ENCODE measurements at regions of chr9 and their contacts with region 1.

Region 1: GRCh38 chr9:76441551-76442322 is 17.2 kb upstream of the GCNT1 start:
- DNase-seq: no peak
- H3K4me3 Mint-ChIP-seq: peak overlapping the region; percentile 89
- H3K27ac Mint-ChIP-seq: peak overlapping the region; percentile 98
- H3K4me1 Mint-ChIP-seq: peaks cover 68% of the 10 kb centered on the region
- H3K27me3 Mint-ChIP-seq: no peaks in the 10 kb centered on the region

Region 2: GRCh38 chr9:75148561-75148960 is 1293.2 kb before region 1 on chr9:
- intact Hi-C with region 1: loop called (anchors 5 kb)
- DNase-seq: peak; percentile 37
- H3K4me3 Mint-ChIP-seq: peak overlapping the region; percentile 62
- H3K27ac Mint-ChIP-seq: peak overlapping the region; percentile 87
- H3K4me1 Mint-ChIP-seq: peaks cover 79% of the 10 kb centered on the region
- H3K27me3 Mint-ChIP-seq: no peaks in the 10 kb centered on the region

Region 3: GRCh38 chr9:76231001-76231400 is 210.7 kb before region 1 on chr9:
- intact Hi-C with region 1: no loop called
- DNase-seq: no peak
- H3K4me3 Mint-ChIP-seq: no peak overlapping the region
- H3K27ac Mint-ChIP-seq: no peak overlapping the region
- H3K4me1 Mint-ChIP-seq: no peaks in the 10 kb centered on the region
- H3K27me3 Mint-ChIP-seq: peaks cover 4% of the 10 kb centered on the region

Region 4: DNA sequence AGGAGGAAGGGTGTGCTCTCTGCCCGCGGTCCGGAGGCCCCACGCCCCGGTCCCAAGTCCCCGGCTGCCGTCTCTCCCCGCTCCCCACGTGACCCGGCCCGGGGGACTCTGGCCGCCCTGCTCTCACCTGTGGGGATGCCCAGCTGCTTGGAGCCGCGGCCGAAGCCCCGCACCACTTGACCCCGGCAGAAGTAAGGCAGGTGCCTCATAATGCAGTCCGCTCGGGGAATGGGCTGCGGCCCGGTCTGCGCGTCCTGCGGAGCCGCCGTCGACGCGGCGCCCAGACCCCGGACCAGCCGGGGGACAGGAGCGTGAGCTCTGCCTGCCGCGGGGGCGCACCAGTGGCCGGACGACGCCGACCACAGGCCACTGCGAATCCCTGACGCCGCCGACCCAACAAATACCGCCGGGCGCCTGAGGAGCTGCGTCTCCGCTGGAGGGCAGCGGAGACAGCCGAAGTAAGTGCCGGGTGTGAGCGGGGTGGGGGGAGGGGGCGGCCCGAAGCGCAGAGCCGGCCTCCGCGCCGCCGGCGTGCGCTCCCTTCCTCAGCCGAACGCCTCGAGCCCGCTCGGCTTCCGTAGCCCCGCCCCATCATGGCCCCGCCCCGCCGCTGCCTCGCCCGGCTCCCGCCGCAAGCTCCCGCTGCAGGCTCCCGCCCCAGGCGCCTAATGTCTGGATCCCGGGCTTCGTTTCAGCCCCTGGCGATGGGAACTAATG is 47.6 kb before region 1 on chr9 and contains the start of gene RFK:
- intact Hi-C with region 1: loop called (anchors 1 kb)
- DNase-seq: peak; percentile 89
- H3K4me3 Mint-ChIP-seq: peak within 1 kb of the TSS; percentile 97
- H3K27ac Mint-ChIP-seq: peak within 1 kb of the TSS; percentile 99
- H3K4me1 Mint-ChIP-seq: peaks cover 34% of the 10 kb centered on the region
- H3K27me3 Mint-ChIP-seq: no peaks in the 10 kb centered on the region
- total RNA-seq, gene RFK: 20.3 and 20.8 TPM in 2 replicates

Region 5: DNA sequence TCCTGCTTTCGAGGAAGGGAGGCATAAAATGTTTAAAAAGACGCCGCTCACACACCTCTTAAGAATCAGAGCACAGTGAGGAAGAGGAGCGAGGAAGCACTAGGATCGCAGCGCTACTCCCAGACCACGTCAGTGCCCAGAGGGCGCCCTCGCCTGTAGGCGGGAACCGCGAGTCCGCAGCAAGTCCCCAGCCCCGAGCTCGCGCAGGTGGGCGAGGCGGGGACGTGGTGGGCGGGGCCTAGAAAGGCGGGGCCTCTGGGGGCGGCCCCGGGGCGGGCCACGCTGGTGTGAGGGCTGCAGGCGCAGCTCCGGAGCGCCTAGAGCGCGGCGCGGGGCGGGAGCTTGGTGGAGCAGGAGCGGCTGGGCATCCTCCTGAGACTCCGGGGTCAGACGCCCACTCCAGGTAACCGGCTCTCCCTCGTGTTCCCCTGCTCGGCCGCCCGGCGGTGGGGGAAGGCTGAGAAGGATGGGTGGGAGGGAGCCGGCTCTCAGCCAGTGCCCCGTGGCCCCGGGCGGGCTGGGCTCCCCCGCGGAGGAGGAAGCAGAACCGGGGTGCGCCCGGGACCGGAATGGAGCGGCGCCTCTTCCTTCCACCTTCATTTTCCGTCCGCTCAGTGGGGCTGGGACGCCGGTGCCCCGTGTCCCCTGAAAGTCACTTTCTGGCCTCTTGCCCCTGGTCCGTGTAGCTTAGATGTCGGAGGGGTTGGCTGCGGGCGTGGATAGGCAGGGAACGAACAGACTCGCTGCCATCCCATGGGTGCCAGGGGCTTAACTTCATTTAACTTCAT is 17.4 kb after region 1 on chr9 and contains the start of gene GCNT1:
- intact Hi-C with region 1: loop called (anchors 1 kb)
- DNase-seq: peak; percentile 92
- H3K4me3 Mint-ChIP-seq: peak within 1 kb of the TSS; percentile 87
- H3K27ac Mint-ChIP-seq: peak within 1 kb of the TSS; percentile 91
- H3K4me1 Mint-ChIP-seq: peaks cover 35% of the 10 kb centered on the region
- H3K27me3 Mint-ChIP-seq: peaks cover 3% of the 10 kb centered on the region
- total RNA-seq, gene GCNT1: 11.6 and 13.1 TPM in 2 replicates

Region 6: GRCh38 chr9:77011973-77012821 is 570.5 kb after region 1 on chr9:
- intact Hi-C with region 1: loop called (anchors 5 kb)
- DNase-seq: peak; percentile 44
- H3K4me3 Mint-ChIP-seq: no peak overlapping the region
- H3K27ac Mint-ChIP-seq: no peak overlapping the region
- H3K4me1 Mint-ChIP-seq: peaks cover 10% of the 10 kb centered on the region
- H3K27me3 Mint-ChIP-seq: peaks cover 64% of the 10 kb centered on the region

Measured in activated T-helper 1 cell treated with anti-CD3 and anti-CD28 coated beads, Interleukin-12 subunit alpha, Interleukin-12 subunit beta, Interleukin-2, Interleukin-4 antibody, amounts not matched to agents 30 ng/mL and 10 ng/mL and 1 ng/mL, durations not matched to agents 14 hours and 24 hours and 36 hours (primary cell).